Right ventricle myocardium superior (tissue), 1 donor: ENCODE measurements at regions of chr5 and their contacts with region 1.

Region 1: GRCh38 chr5:152271420-152271819 is 133.7 kb downstream of the NMUR2 start:
- DNase-seq: no peak
- ATAC-seq: peak; percentile 84

Region 2: DNA sequence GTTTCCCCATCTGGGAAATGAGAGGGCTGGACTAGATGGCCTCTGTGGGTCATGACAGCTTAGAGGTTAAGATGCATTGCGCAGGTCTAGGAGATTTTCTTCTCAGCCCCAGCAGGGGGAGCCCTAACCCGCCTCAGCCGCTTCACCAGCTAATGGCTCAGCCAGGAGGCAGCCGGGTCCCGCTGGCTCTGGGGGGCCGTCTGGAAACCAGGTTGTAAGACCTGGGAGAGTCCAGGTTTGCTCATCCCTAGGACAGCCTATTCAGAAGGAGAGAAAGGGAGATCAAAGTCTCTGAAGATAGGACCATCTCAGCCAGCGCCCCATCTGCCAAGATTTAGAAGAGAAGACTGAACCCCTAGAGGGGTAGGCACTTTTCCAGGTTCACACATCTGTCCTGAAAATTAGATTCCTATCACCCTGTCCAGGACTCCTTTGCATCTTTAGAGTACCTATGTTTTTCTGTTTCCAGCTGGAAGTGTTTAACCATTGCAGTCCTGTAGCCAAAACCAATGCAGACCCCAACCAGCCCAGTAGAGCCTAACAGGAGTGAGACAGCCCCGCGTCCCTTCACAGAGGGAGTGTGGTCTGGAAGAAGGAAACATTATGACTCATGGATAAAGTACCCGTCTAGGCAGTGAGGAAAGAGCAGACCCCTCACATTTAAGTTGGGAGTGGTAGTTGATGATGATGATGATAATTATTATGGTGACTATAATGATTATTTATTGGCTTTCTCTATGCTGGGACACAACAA is 612.2 kb before region 1 on chr5:
- intact Hi-C with region 1: loop called (anchors 5 kb)
- DNase-seq: peak; percentile 84
- ATAC-seq: peak; percentile 88

Region 3: GRCh38 chr5:151825445-151825844 is 446.0 kb before region 1 on chr5:
- intact Hi-C with region 1: loop called (anchors 5 kb)
- DNase-seq: no peak
- ATAC-seq: peak; percentile 87

Region 4: GRCh38 chr5:152004095-152004494 is 267.3 kb before region 1 on chr5:
- intact Hi-C with region 1: no loop called
- DNase-seq: no peak
- ATAC-seq: no peak

Region 5: GRCh38 chr5:152427721-152428120 is 156.3 kb after region 1 on chr5:
- intact Hi-C with region 1: no loop called
- DNase-seq: no peak
- ATAC-seq: no peak